Body of pancreas (tissue), 4 donors: ENCODE measurements at regions of chr10 and their contacts with region 1.

Region 1: DNA sequence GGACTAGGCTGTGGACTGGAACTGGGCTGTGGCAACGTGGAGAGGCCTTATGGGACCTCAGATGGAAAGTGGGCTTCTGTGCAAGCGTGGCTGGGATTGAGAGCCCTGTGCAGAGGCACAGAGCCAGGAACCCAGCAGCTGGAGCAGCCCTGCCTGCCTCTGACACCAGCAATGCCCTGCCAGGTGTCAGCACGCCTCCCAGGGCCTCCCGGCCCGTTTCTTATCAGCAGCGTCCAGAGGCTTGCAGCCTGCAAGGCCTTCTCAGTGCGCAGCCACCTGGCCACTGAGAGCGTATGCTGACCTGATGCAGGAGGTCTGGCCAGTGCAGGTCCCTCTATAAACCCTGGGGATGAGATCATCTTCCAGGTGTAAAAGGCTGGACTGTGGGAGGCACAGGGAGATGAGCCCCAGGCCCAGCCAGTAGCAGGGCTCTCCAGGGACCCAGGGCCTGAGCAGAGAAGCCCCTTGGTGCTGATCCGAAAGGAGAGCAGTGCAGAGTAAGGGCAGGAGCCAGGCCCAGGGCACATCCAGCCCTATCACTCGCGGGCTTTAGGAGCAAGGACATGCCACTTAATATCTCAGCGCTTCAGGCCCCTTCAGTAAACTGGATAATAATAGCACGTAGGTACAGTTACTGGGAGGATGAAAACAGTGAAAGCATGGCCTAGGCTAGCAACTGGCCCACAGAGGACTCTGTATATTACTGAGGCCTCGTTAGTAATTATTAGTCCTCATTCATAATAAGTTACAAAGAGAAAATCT is 38.8 kb upstream of the ANTXRL start:
- DNase-seq: peak; percentile 45 to 73 (median 58)
- ATAC-seq: peak; percentile 70
- H3K4me3 ChIP-seq: no peak overlapping the region
- H3K27ac ChIP-seq: no peak overlapping the region
- H3K4me1 ChIP-seq: no peaks in the 10 kb centered on the region
- H3K27me3 ChIP-seq: no peaks in the 10 kb centered on the region
- CTCF ChIP-seq: no peak
- POLR2A ChIP-seq: no peak

Region 2: GRCh38 chr10:46293832-46294640 is 46.0 kb after region 1 on chr10:
- intact Hi-C with region 1: loop called (anchors 10 kb)
- DNase-seq: peak in 1 of 4 donors; percentile 53
- ATAC-seq: no peak
- H3K4me3 ChIP-seq: no peak overlapping the region
- H3K27ac ChIP-seq: no peak overlapping the region
- H3K4me1 ChIP-seq: no peaks in the 10 kb centered on the region
- H3K27me3 ChIP-seq: no peaks in the 10 kb centered on the region
- CTCF ChIP-seq: peak in 1 of 7 experiments; percentile 34
- POLR2A ChIP-seq: no peak